ENCODE measurements at regions of chr20 and their contacts with region 1.

Region 1: GRCh38 chr20:13119583-13119982 is 101.5 kb upstream of the ISM1 start:
- DNase-seq: peak; percentile 57
- H3K4me3 ChIP-seq: no peak overlapping the region
- H3K27ac ChIP-seq: no peak overlapping the region
- H3K4me1 ChIP-seq: no peaks in the 10 kb centered on the region
- H3K27me3 ChIP-seq: no peaks in the 10 kb centered on the region
- CTCF ChIP-seq: peak; percentile 78 to 87

Region 2: GRCh38 chr20:13105864-13106457 is 13.6 kb before region 1 on chr20:
- CTCF ChIA-PET with region 1: interaction called, 10 read pairs
- dilution Hi-C with region 1: no loop called
- in situ Hi-C with region 1: no loop called
- intact Hi-C with region 1: no loop called
- DNase-seq: peak; percentile 12
- H3K4me3 ChIP-seq: no peak overlapping the region
- H3K27ac ChIP-seq: no peak overlapping the region
- H3K4me1 ChIP-seq: peaks cover 3% of the 10 kb centered on the region
- H3K27me3 ChIP-seq: no peaks in the 10 kb centered on the region
- CTCF ChIP-seq: peak; percentile 62 to 65

Region 3: GRCh38 chr20:13158369-13158768 is 38.8 kb after region 1 on chr20:
- CTCF ChIA-PET with region 1: no interaction called
- dilution Hi-C with region 1: no loop called
- in situ Hi-C with region 1: no loop called
- intact Hi-C with region 1: no loop called
- DNase-seq: no peak
- H3K4me3 ChIP-seq: no peak overlapping the region
- H3K27ac ChIP-seq: no peak overlapping the region
- H3K4me1 ChIP-seq: no peaks in the 10 kb centered on the region
- H3K27me3 ChIP-seq: no peaks in the 10 kb centered on the region
- CTCF ChIP-seq: no peak

Region 4: DNA sequence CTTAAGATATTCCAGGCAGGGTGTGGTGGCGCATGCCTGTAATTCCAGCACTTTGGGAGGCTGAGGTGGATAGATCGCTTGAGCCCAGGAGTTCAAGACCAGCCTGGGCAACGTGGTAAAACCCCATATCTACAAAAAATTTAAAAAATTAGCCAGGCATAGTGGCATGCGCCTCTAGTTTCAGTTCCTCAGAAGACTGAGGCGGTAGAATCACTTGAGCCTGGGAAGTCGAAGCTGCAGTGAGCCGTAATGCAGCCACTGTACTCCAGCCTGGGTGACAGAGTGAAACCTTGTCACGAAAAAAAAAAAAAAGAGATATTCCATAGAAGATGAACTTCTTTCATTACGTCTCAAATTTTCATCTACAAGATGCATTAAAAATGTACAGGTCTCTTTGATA is 54.8 kb after region 1 on chr20:
- CTCF ChIA-PET with region 1: no interaction called
- dilution Hi-C with region 1: no loop called
- in situ Hi-C with region 1: no loop called
- intact Hi-C with region 1: no loop called
- DNase-seq: no peak
- H3K4me3 ChIP-seq: no peak overlapping the region
- H3K27ac ChIP-seq: no peak overlapping the region
- H3K4me1 ChIP-seq: no peaks in the 10 kb centered on the region
- H3K27me3 ChIP-seq: no peaks in the 10 kb centered on the region
- CTCF ChIP-seq: no peak

Region 5: DNA sequence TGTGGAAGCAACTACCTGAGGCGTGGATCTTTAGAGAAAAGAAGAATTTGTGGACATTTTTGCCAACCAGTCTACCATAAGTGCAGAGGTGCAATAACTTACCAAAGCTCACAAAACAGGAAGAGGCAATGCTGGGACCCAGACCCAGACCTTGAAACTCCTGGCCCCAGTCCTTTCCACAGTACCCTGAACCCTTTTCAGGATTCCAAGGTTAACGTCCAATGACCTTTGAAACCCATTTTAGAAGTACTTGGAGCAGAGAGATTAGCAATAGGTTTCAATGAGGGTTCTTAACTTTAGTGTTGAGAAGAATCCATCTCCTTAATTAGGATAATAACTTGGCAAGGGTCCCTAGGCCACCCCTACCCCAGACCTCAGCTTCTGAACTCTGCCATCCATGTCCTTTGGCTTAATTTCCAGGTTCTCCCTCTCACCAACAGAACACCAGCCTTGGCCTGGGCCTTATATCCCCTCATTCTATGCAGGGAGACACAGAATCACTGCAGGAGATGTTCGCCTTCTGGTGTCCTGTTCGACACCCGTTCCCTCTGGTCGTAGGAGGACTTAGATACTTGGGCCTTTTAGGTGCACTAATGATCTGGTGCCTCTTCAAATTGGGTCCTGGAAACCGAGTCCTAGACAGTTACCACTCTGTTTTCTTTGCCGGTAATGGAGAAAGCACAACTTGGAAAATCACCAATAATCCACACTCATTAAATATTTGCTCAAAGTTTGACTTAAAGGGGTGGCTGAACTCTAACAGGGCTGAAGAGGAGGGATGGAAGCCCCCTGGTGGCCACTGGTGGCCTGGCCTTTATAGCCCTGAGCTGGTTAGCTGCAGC is 142.1 kb after region 1 on chr20:
- CTCF ChIA-PET with region 1: interaction called, 10 read pairs
- dilution Hi-C with region 1: no loop called
- in situ Hi-C with region 1: loop called (anchors 10 to 25 kb)
- intact Hi-C with region 1: loop called (anchors 1 kb)
- DNase-seq: peak; percentile 36
- H3K4me3 ChIP-seq: no peak overlapping the region
- H3K27ac ChIP-seq: no peak overlapping the region
- H3K4me1 ChIP-seq: no peaks in the 10 kb centered on the region
- H3K27me3 ChIP-seq: no peaks in the 10 kb centered on the region
- CTCF ChIP-seq: peak; percentile 90 to 94

Region 6: GRCh38 chr20:13302647-13303450 is 183.3 kb after region 1 on chr20:
- CTCF ChIA-PET with region 1: no interaction called
- dilution Hi-C with region 1: no loop called
- in situ Hi-C with region 1: no loop called
- intact Hi-C with region 1: loop called (anchors 1 kb)
- DNase-seq: peak; percentile 30
- H3K4me3 ChIP-seq: no peak overlapping the region
- H3K27ac ChIP-seq: no peak overlapping the region
- H3K4me1 ChIP-seq: peaks cover 14% of the 10 kb centered on the region
- H3K27me3 ChIP-seq: no peaks in the 10 kb centered on the region
- CTCF ChIP-seq: peak; percentile 84

Region 7: DNA sequence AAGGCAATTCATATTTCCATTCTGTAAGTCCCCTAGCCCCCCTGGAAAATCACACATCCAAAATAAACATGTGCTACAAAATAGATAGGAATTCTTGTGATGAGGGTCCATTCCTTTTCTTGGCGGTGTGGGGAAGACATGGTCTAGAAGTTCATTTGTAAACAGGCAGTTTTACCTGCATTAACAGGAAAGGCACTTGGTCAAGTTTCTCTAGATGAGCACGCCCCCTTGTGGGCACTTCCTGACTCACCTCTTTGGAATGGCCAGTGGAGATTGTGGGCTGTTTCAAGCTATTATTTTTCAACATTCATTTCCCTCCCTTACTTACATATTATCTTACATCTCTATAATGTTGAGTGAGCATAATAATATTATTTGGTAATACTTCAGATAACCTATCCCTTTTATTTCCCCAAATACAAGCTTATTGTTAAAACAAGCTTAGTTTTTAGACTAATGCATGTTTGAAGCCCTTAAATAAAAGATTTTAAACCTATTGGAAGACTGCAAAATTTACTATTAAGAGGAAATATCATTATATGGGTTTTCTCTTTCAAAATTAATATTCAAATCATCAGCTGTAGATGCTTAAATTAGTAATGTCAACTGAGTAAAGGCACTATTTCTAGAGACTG is 427.0 kb after region 1 on chr20:
- CTCF ChIA-PET with region 1: no interaction called
- dilution Hi-C with region 1: no loop called
- in situ Hi-C with region 1: loop called in 1 of 2 experiments (anchors 25 kb)
- intact Hi-C with region 1: loop called (anchors 1 kb)
- DNase-seq: peak; percentile 54
- H3K4me3 ChIP-seq: no peak overlapping the region
- H3K27ac ChIP-seq: no peak overlapping the region
- H3K4me1 ChIP-seq: no peaks in the 10 kb centered on the region
- H3K27me3 ChIP-seq: no peaks in the 10 kb centered on the region
- CTCF ChIP-seq: peak; percentile 69 to 76

Region 8: GRCh38 chr20:13771853-13772453 is 652.4 kb after region 1 on chr20:
- CTCF ChIA-PET with region 1: no interaction called
- dilution Hi-C with region 1: no loop called
- in situ Hi-C with region 1: no loop called
- intact Hi-C with region 1: loop called (anchors 5 kb)
- DNase-seq: no peak
- H3K4me3 ChIP-seq: no peak overlapping the region
- H3K27ac ChIP-seq: no peak overlapping the region
- H3K4me1 ChIP-seq: no peaks in the 10 kb centered on the region
- H3K27me3 ChIP-seq: no peaks in the 10 kb centered on the region
- CTCF ChIP-seq: peak; percentile 46 to 49

Region 9: DNA sequence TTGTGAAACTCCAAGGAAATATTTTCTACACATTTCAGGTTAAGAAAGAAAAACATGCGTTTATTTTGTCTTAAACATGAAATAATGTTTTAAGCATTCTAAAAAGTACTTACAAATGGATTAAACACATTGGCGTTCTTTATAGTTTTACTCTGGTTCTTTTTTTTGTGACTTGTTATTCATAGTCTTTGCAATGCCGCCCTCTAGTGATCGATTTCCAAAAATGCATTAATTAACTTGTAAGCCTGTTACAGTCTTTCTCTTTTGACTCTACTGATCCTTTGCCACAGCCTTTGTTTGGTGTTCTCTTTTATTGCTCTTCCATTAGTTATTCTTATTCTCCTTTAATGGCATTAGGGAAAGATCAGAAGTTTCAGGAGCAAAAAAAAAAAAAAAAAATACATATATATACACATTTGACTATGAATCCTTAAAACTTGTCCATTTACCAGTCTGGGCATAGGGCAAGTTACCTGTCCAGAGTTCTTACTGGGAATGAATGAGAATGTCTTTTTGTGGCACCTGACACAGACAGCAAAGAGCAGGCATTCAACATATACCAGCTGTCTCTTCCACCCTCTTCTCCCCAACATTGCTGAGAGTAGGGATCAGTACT is 935.7 kb after region 1 on chr20:
- CTCF ChIA-PET with region 1: no interaction called
- dilution Hi-C with region 1: no loop called
- in situ Hi-C with region 1: no loop called
- intact Hi-C with region 1: loop called (anchors 10 kb)
- DNase-seq: peak; percentile 48
- H3K4me3 ChIP-seq: no peak overlapping the region
- H3K27ac ChIP-seq: no peak overlapping the region
- H3K4me1 ChIP-seq: no peaks in the 10 kb centered on the region
- H3K27me3 ChIP-seq: no peaks in the 10 kb centered on the region
- CTCF ChIP-seq: peak; percentile 47 to 57

Measured in mammary epithelial cell (primary cell).